ENCODE measurements at regions of chr12 and their contacts with region 1.

Region 1: DNA sequence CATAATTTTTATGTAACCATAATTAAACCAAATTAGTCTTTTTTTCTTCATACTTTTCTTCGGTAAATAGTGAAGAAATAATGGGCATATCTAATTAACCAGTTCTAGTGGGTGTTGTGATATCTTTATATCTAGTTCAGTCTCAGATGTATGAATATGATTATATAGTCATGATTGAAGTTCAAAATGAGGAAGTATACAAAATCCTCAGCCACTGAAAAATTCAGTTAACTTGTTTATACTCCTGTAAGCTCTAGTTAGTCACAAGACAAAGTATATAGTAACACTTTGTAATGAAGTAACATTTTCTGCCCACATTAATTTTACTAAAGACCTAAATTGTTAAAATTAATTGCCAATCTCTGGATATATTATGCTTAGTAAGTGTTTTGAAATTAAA is 46.5 kb downstream of the CAND1 start:
- DNase-seq: no peak
- ATAC-seq: peak in 2 of 3 donors; percentile 20 to 38
- H3K4me3 ChIP-seq: no peak overlapping the region
- H3K4me3 Mint-ChIP-seq: no peak overlapping the region
- H3K27ac ChIP-seq: no peak overlapping the region
- H3K27ac Mint-ChIP-seq: peak overlapping the region; percentile 82 to 87
- H3K4me1 ChIP-seq: peaks cover 5% of the 10 kb centered on the region
- H3K4me1 Mint-ChIP-seq: peaks cover 17 to 24% of the 10 kb centered on the region in 2 donors
- H3K27me3 ChIP-seq: no peaks in the 10 kb centered on the region
- H3K27me3 Mint-ChIP-seq: no peaks in the 10 kb centered on the region
- CTCF ChIP-seq: no peak

Region 2: GRCh38 chr12:67268896-67269631 is 46.6 kb before region 1 on chr12 and contains the start of gene CAND1:
- intact Hi-C with region 1: loop called (anchors 1 kb)
- DNase-seq: peak; percentile 92 to 99
- ATAC-seq: peak; percentile 81 to 93 (median 83)
- H3K4me3 ChIP-seq: peak within 1 kb of the TSS; percentile 88
- H3K4me3 Mint-ChIP-seq: peak within 1 kb of the TSS; percentile 83
- H3K27ac ChIP-seq: peak within 1 kb of the TSS; percentile 97
- H3K27ac Mint-ChIP-seq: peak within 1 kb of the TSS; percentile 95 to 97
- H3K4me1 ChIP-seq: peaks cover 21% of the 10 kb centered on the region
- H3K4me1 Mint-ChIP-seq: peaks cover 36 to 43% of the 10 kb centered on the region in 2 donors
- H3K27me3 ChIP-seq: no peaks in the 10 kb centered on the region
- H3K27me3 Mint-ChIP-seq: no peaks in the 10 kb centered on the region
- CTCF ChIP-seq: no peak
- total RNA-seq, gene CAND1: 103 to 118 (median 104) TPM

Region 3: GRCh38 chr12:67327466-67327865 is 11.8 kb after region 1 on chr12:
- intact Hi-C with region 1: no loop called
- DNase-seq: no peak
- ATAC-seq: no peak
- H3K4me3 ChIP-seq: no peak overlapping the region
- H3K4me3 Mint-ChIP-seq: no peak overlapping the region
- H3K27ac ChIP-seq: no peak overlapping the region
- H3K27ac Mint-ChIP-seq: no peak overlapping the region
- H3K4me1 ChIP-seq: no peaks in the 10 kb centered on the region
- H3K4me1 Mint-ChIP-seq: peaks cover 5 to 6% of the 10 kb centered on the region in 2 donors
- H3K27me3 ChIP-seq: no peaks in the 10 kb centered on the region
- H3K27me3 Mint-ChIP-seq: no peaks in the 10 kb centered on the region
- CTCF ChIP-seq: no peak

Measured in natural killer cell (primary cell).